BJ (cell line): ENCODE measurements at regions of chr21 and their contacts with region 1.

Region 1: GRCh38 chr21:33360881-33361602 is 36.3 kb downstream of the IFNAR1 start:
- DNase-seq: peak; percentile 76
- H3K4me3 ChIP-seq: no peak overlapping the region
- H3K27me3 ChIP-seq: no peaks in the 10 kb centered on the region
- CTCF ChIP-seq: peak; percentile 86

Region 2: GRCh38 chr21:33324291-33325221 is 36.5 kb before region 1 on chr21 and contains the start of gene IFNAR1:
- CTCF ChIA-PET with region 1: interaction called, 11 read pairs
- POLR2A ChIA-PET with region 1: no interaction called
- DNase-seq: peak; percentile 84
- H3K4me3 ChIP-seq: peak within 1 kb of the TSS; percentile 97
- H3K27me3 ChIP-seq: no peaks in the 10 kb centered on the region
- CTCF ChIP-seq: no peak
- polyA plus RNA-seq, gene IFNAR1: 11.4 and 15.0 TPM in 2 replicates

Region 3: DNA sequence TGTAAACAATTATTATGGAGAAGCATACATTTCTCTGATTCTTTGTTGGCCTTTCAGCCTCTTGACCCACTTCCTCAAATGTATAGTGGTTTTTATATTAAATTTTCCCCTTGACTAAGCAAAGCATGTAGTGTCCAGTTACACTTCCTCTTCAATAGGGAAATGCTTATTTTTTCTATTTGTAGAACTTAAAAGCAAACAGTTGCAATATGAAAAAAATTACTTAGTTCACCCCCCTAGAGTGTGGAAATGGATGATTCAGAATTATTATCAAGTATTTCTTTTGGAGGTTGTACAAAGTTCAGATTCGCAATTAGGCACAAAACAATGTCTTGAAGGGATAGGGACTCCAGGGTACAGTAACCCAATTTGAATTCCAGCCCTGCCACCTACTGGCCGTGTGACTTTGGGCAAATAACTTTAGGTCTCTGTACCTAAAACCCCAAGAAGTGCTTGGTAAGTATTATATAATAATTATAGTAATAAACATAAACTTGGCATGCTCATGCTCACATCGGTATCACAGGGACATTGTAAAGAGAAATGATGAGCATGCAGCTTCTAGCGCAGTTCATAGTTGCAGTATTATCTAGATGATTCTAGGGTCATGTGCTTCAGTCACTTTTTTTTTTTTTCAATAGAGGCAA is 13.5 kb after region 1 on chr21:
- CTCF ChIA-PET with region 1: interaction called, 30 read pairs
- POLR2A ChIA-PET with region 1: interaction called, 3 read pairs
- DNase-seq: no peak
- H3K4me3 ChIP-seq: no peak overlapping the region
- H3K27me3 ChIP-seq: no peaks in the 10 kb centered on the region
- CTCF ChIP-seq: peak; percentile 69

Region 4: GRCh38 chr21:33396947-33397346 is 35.9 kb after region 1 on chr21:
- CTCF ChIA-PET with region 1: interaction called, 13 read pairs
- POLR2A ChIA-PET with region 1: no interaction called
- DNase-seq: no peak
- H3K4me3 ChIP-seq: no peak overlapping the region
- H3K27me3 ChIP-seq: no peaks in the 10 kb centered on the region
- CTCF ChIP-seq: no peak

Region 5: DNA sequence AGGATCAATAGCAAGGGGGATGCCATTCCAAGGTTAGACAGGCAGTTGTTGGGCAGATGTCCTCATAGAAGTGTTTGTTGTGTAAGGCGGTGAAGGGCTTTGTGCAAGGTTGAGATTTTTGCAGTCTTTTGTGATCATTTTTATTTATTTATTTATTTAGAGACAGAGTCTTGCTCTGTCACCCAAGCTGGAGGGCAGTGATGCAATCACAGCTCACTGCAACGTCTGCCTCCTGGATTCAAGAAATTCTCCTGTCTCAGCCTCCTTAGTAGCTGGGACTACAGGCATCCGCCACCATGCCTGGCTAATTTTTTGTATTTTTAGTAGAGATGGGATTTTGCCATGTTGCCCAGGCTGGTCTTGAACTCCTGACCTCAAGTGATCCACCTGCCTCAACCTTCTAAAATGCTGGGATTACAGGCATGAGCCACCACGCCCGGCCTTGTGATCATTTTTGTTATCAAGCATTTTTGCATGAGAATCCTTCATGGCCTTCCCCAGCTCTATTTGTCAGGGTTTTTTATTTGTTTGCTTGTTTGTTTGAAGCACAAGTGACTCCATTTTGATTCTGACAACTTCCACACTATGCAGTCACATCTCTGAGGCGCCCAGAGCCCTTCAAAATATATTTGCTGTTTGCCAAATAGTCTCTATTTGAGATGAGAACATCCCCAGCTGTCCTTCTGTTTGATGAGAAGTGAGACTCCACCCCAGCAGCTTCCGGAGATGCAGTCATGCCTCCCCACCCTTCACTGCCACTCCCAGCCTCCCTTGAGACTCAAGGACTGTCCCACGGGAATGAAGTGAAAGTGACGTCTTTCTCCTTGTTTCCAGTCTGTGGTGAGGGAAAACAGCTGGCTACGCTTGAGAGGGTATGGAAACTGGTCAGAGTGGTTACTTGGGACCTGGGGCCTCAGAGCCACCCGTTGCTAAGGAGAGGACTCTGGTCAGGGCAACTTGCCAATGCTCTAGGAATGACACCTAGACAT is 80.7 kb after region 1 on chr21:
- CTCF ChIA-PET with region 1: interaction called, 27 read pairs
- POLR2A ChIA-PET with region 1: no interaction called
- DNase-seq: peak; percentile 53
- H3K4me3 ChIP-seq: no peak overlapping the region
- H3K27me3 ChIP-seq: no peaks in the 10 kb centered on the region
- CTCF ChIP-seq: no peak